ENCODE measurements at regions of chr14 and their contacts with region 1.

Region 1: GRCh38 chr14:93975791-93976476 is 436 bp downstream of the ASB2 start:
- DNase-seq: no peak
- H3K4me3 ChIP-seq: peak overlapping the region; percentile 48 to 68
- H3K27ac ChIP-seq: peak overlapping the region; percentile 95
- H3K4me1 ChIP-seq: peaks cover 6 to 43% of the 10 kb centered on the region in 2 donors
- H3K27me3 ChIP-seq: no peaks in the 10 kb centered on the region
- CTCF ChIP-seq: peak in 2 of 3 experiments; percentile 11 to 21

Region 2: DNA sequence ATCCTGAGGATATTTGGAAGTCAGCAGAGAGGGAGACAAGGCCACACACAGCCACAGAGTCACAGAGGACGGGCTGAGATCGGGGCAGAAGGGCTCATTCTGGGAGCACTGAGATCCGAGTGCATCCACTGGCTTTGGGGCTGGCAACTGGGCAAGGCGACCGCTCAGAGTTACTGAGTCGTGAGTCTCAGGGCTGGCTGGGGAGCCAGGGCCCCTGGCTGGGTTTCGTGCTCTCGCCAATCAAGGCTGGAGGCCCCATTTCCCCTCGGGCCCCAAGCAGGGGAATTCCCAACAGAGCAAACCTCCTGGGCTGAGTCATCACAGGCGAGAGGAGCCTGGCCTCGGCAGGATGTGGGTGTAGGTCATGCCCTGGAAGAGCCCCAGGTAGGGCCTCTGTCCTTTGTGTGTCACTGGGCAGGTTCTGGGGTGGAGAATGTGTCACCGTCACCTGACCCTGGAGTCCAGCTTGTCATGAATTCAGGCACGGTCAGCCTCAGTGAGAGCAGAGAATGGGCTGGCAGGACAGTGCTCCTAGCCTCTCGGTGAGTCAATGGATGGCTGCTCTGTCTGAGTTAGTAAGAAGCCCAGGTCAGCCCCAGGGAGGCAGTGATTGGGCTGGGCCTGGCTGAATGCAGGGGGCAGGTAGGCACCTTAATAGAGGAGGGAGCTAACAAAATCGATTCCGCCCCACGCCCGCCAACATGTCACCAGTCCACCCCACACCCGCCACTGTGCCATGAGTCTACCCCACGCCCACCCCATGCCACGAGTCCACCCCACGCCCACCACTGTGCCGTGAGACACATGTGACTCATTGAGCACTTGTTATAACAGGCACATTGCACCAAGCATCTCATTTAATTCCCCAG is 16.5 kb before region 1 on chr14:
- intact Hi-C with region 1: loop called (anchors 1 kb)
- DNase-seq: peak; percentile 75 to 90
- H3K4me3 ChIP-seq: no peak overlapping the region
- H3K27ac ChIP-seq: peak overlapping the region; percentile 71 to 80
- H3K4me1 ChIP-seq: peaks cover 6 to 51% of the 10 kb centered on the region in 2 donors
- H3K27me3 ChIP-seq: no peaks in the 10 kb centered on the region
- CTCF ChIP-seq: no peak

Region 3: GRCh38 chr14:93965287-93965851 is 10.6 kb before region 1 on chr14:
- intact Hi-C with region 1: loop called (anchors 1 kb)
- DNase-seq: peak in 1 of 2 donors; percentile 79
- H3K4me3 ChIP-seq: no peak overlapping the region
- H3K27ac ChIP-seq: peak overlapping the region; percentile 95
- H3K4me1 ChIP-seq: peaks cover 11 to 51% of the 10 kb centered on the region in 2 donors
- H3K27me3 ChIP-seq: no peaks in the 10 kb centered on the region
- CTCF ChIP-seq: no peak

Region 4: DNA sequence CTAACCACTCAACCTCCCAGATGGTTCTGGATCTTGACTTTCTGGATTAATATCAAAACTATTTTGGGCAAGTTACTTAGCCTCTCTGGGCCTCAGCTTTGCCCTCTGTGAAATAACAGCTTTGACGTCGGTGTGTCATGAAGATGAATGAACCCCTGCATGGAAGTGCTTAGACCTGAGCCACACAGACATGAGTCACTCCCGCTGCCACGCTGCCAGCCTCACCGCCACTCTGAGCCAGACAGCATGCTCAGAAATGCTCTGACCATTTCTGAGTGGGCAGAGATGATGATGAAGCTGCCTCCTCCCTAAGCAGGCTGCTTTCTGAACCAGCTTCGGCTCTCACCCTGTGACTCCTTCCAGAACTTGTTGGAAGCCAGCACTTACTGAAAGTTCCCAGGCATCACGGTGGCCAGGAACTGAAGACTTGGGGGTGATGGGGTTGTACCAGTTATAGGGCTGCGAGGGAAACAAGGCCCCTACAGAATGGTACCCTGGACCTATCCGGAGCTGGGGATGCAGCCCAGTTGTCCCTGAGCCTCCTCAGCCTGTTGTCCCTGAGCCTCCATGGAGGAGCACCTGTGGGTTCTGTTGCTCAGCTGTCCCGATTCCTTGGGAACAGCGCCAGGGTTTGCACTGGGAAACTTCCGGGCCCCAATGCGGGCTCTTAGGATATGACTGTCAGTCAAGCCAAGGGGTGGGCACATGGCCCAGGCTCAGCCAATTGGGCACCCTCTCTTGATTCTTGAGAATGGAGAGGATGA is 19.2 kb after region 1 on chr14:
- intact Hi-C with region 1: loop called (anchors 2 kb)
- DNase-seq: peak; percentile 85 to 96
- H3K4me3 ChIP-seq: peak overlapping the region; percentile 9 to 55
- H3K27ac ChIP-seq: peak overlapping the region; percentile 96 to 97
- H3K4me1 ChIP-seq: peaks cover 9 to 30% of the 10 kb centered on the region in 2 donors
- H3K27me3 ChIP-seq: no peaks in the 10 kb centered on the region
- CTCF ChIP-seq: no peak

Measured in ascending aorta (tissue), 2 donors.